HepG2 (cell line): ENCODE measurements at regions of chr2 and their contacts with region 1.

Region 1: DNA sequence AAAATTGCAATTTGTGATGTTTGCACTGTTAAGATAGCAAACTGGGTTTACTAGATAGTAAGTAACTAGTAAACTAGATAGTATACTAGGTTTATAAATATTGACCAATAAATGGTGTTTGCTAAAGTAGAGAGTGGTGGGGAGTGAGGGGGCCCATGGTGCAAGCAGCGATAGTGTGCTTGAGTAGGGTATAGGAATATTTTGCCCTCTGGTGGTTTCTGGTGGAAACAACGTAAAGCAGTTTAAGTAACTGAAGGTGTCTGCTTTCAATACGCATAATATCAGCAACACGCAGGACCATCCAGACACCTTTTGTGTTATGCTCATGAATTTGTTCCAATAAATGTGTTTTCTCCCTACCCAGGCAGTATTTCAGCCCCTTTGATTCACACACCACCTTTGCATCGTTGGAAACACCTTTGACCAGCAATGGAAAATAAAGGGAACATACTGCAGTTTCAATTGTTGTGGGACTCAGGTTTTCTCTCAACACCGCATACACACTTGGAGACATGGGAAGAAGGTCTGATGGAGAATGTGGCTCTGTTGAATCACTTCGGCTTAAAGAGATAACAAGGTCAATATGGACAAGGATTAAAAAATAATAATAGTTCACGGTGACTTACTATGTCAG is 16.7 kb upstream of the STAT1 start:
- DNase-seq: peak; percentile 52
- ATAC-seq: peak; percentile 95
- H3K4me3 ChIP-seq: no peak overlapping the region; a peak in 1 of 6 replicates
- H3K27ac ChIP-seq: no peak overlapping the region
- H3K4me1 ChIP-seq: peaks cover 32% of the 10 kb centered on the region
- H3K27me3 ChIP-seq: no peaks in the 10 kb centered on the region
- CTCF ChIP-seq: peak; percentile 80
- EP300 ChIP-seq: no peak
- POLR2A ChIP-seq: no peak
- RAD21 ChIP-seq: peak; percentile 53; the same call in 1 of the 2 replicates

Region 2: GRCh38 chr2:190853531-190854383 is 176.9 kb before region 1 on chr2:
- CTCF ChIA-PET with region 1: no interaction called
- POLR2A ChIA-PET with region 1: no interaction called
- in situ Hi-C with region 1: no loop called
- intact Hi-C with region 1: loop called (anchors 10 kb)
- DNase-seq: no peak
- ATAC-seq: no peak
- H3K4me3 ChIP-seq: no peak overlapping the region
- H3K27ac ChIP-seq: no peak overlapping the region
- H3K4me1 ChIP-seq: peaks cover 24% of the 10 kb centered on the region
- H3K27me3 ChIP-seq: no peaks in the 10 kb centered on the region
- CTCF ChIP-seq: no peak
- EP300 ChIP-seq: no peak
- POLR2A ChIP-seq: no peak
- RAD21 ChIP-seq: no peak

Region 3: DNA sequence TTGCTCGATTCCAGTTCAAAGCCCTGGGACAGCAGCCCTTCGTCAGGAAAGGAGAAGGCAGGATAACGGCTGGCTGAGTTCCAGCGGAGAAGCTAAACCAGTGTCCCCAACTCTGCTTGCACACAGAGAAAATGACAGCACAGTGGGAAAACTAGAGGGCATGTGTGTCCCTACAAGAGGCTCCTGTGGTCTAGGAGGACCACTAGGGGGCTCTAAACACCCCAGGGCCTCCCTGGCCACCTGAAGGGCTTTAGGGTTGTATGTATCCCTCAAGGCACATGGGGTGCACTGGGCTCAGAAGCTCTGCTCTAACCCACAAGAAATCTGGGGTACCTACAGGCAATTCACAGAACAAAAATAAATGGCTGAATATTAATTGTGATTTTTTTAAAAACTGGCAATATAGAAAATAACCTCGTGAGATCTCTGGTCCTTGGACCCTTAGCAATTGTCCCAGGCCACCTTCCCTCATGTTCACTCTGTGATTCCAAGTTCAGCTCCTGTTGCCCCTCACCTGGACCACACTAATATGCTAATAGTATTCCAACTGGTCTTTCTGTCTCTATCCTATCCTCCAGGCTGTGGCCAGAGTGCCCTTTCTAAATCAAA is 34.2 kb before region 1 on chr2:
- CTCF ChIA-PET with region 1: interaction called, 21 read pairs
- POLR2A ChIA-PET with region 1: no interaction called
- in situ Hi-C with region 1: no loop called
- intact Hi-C with region 1: loop called (anchors 1 kb)
- DNase-seq: peak; percentile 70
- ATAC-seq: peak; percentile 100
- H3K4me3 ChIP-seq: no peak overlapping the region
- H3K27ac ChIP-seq: no peak overlapping the region
- H3K4me1 ChIP-seq: no peaks in the 10 kb centered on the region
- H3K27me3 ChIP-seq: no peaks in the 10 kb centered on the region
- CTCF ChIP-seq: peak; percentile 77
- EP300 ChIP-seq: no peak
- POLR2A ChIP-seq: no peak
- RAD21 ChIP-seq: peak; percentile 72

Region 4: DNA sequence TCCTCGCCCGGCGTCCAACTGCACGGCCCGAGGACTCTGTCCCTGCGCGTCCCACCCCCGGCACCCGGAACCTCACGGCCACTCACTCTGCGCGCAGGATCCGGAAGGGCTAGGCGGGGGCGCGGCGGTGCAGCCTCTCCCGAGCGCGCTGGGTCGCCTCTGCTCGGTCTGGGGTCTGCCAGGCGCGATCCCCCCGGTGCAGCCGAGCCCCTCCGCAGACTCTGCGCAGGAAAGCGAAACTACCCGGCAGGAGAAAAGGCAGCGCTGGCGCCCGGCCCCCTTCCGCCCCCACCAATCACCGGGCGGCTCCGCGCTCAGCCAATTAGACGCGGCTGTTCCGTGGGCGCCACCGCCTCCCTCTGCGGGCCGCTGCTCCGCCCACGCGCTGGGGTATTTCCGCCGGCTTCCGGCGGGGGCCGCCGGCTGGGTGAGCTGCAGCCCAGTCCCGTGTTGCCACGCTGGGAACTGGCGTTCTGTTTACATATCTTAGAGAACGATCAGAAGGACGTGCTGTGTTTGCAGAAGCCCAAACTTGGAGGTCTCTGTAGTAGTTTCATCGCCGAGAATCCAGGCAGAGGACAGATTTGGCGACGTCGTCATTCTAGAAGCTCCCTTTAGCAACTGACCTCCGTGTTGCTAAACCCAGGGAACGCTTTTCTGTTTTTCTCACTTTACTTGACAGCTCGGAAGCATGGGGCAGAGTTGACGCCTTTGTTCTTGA is 16.5 kb before region 1 on chr2 and contains the start of gene STAT1:
- CTCF ChIA-PET with region 1: no interaction called
- POLR2A ChIA-PET with region 1: interaction called, 4 read pairs
- in situ Hi-C with region 1: no loop called
- intact Hi-C with region 1: loop called (anchors 1 kb)
- DNase-seq: peak; percentile 89
- ATAC-seq: peak; percentile 95
- H3K4me3 ChIP-seq: peak within 1 kb of the TSS; percentile 81 to 92 (median 89)
- H3K27ac ChIP-seq: peak within 1 kb of the TSS; percentile 81
- H3K4me1 ChIP-seq: peaks cover 39% of the 10 kb centered on the region
- H3K27me3 ChIP-seq: peaks cover 0 to 7% of the 10 kb centered on the region in 2 experiments; a peak in 1 of 5 replicates
- CTCF ChIP-seq: peak; percentile 27; the same call in 1 of the 2 replicates
- EP300 ChIP-seq: peak; percentile 56 to 100; a peak in 3 of 4 replicates
- POLR2A ChIP-seq: peak; percentile 95 to 96
- RAD21 ChIP-seq: peak; percentile 66
- total RNA-seq, gene STAT1: 59.6 and 90.6 TPM in 2 replicates